H1 (cell line): ENCODE measurements at regions of chr4 and their contacts with region 1.

Region 1: GRCh38 chr4:40258627-40259026 is 61.8 kb downstream of the RHOH start:
- DNase-seq: no peak
- H3K4me3 ChIP-seq: no peak overlapping the region
- H3K27ac ChIP-seq: no peak overlapping the region
- H3K4me1 ChIP-seq: peaks cover 0 to 3% (median 3%) of the 10 kb centered on the region in 4 experiments; a peak in 2 of 7 replicates
- H3K27me3 ChIP-seq: no peaks in the 10 kb centered on the region; a peak in 2 of 7 replicates
- CTCF ChIP-seq: no peak
- EP300 ChIP-seq: no peak
- POLR2A ChIP-seq: no peak
- RAD21 ChIP-seq: no peak

Region 2: DNA sequence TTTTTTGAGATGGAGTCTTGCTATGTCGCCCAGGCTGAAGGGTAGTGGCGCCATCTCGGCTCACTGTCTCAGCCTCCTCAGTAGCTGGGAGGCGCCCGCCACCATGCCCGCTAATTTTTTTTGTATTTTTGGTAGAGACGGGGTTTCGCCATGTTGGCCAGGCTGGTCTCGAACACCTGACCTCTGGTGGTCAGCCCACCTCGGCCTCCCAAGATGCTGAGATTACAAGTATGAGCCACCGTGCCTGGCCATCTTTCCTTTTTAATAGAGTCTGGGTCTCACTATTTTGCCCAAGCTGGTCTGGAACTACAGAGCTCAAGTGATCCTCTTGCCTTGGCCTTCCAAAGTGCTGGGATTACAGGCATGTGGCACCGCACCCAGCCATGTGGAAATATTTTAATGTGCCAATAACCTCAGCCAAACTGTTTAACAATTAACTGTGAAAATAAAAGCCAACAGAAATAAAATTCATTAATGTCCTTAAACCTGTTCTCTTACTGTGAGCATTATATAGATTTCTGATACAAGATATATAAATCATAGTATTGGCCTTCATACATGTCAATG is 297.2 kb before region 1 on chr4:
- CTCF ChIA-PET with region 1: no interaction called
- POLR2A ChIA-PET with region 1: no interaction called
- DNase-seq: no peak
- H3K4me3 ChIP-seq: no peak overlapping the region
- H3K27ac ChIP-seq: no peak overlapping the region
- H3K4me1 ChIP-seq: no peaks in the 10 kb centered on the region
- H3K27me3 ChIP-seq: no peaks in the 10 kb centered on the region
- CTCF ChIP-seq: no peak
- EP300 ChIP-seq: no peak
- POLR2A ChIP-seq: no peak
- RAD21 ChIP-seq: no peak

Region 3: DNA sequence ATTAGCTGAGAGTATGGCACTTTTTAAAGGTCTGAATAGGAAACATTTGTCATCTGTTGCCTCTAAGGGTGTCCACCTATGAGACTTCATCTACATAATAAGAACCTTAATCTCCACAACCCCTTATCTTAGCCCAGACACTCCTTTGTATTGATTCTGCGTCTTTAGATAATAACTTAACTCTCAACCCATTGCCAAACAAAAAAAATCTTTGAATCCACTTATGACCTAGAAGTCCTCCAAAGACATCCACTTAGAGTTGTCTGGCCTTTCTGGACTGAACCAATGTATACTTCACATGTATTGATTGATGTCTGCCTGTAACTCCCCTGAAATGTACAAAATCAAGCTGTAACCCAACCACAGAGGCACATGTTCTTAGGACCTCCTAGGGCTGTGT is 10.5 kb after region 1 on chr4:
- CTCF ChIA-PET with region 1: interaction called, 11 read pairs
- POLR2A ChIA-PET with region 1: interaction called, 3 read pairs
- DNase-seq: no peak
- H3K4me3 ChIP-seq: no peak overlapping the region
- H3K27ac ChIP-seq: no peak overlapping the region
- H3K4me1 ChIP-seq: peaks cover 1 to 6% (median 3%) of the 10 kb centered on the region in 4 experiments; a peak in 2 of 7 replicates
- H3K27me3 ChIP-seq: no peaks in the 10 kb centered on the region
- CTCF ChIP-seq: no peak
- EP300 ChIP-seq: no peak
- POLR2A ChIP-seq: no peak
- RAD21 ChIP-seq: no peak